ENCODE measurements at regions of chr2 and their contacts with region 1.

Region 1: GRCh38 chr2:96951093-96951654 is 35.2 kb downstream of the FAM178B start:
- DNase-seq: peak; percentile 77 to 78
- H3K4me3 ChIP-seq: peak overlapping the region in 2 of 3 donors; percentile 2 to 31
- H3K27ac ChIP-seq: peak overlapping the region in 1 of 2 donors; percentile 49
- H3K4me1 ChIP-seq: peaks cover 8 to 19% of the 10 kb centered on the region in 2 donors
- H3K27me3 ChIP-seq: no peaks in the 10 kb centered on the region
- CTCF ChIP-seq: peak; percentile 94 to 97 (median 96)
- POLR2A ChIP-seq: no peak

Region 2: DNA sequence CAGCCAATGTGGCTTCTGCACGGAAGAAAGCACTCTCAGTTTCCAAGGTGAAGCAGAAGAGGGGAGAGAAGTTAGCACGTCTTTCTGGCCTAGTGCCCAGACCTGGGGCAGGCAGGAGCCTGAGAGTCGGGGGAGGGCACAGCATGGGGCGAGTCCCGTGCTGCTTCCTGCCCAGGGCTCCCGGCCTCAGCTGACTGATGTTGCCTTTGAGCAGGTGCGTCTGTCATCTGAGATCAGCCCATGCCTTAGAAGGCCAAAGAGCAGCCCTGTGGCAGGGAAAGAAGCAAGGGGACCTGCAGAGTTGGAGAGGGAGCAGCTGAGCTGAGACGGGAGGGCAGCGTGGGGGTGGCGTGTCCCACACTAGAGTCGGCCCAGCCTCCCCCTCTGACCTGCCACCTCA is 1650.7 kb before region 1 on chr2:
- intact Hi-C with region 1: no loop called
- DNase-seq: peak in 1 of 2 donors; percentile 53
- H3K4me3 ChIP-seq: no peak overlapping the region
- H3K27ac ChIP-seq: no peak overlapping the region
- H3K4me1 ChIP-seq: peaks cover 0 to 4% of the 10 kb centered on the region in 2 donors
- H3K27me3 ChIP-seq: no peaks in the 10 kb centered on the region
- CTCF ChIP-seq: no peak
- POLR2A ChIP-seq: no peak

Region 3: GRCh38 chr2:96638144-96639121 is 312.7 kb before region 1 on chr2 and contains the start of gene KANSL3:
- intact Hi-C with region 1: no loop called
- DNase-seq: peak; percentile 86 to 95
- H3K4me3 ChIP-seq: peak within 1 kb of the TSS; percentile 56 to 81 (median 74)
- H3K27ac ChIP-seq: peak within 1 kb of the TSS; percentile 98 to 99
- H3K4me1 ChIP-seq: peaks cover 0 to 20% of the 10 kb centered on the region in 2 donors
- H3K27me3 ChIP-seq: no peaks in the 10 kb centered on the region
- CTCF ChIP-seq: peak in 2 of 3 donors; percentile 14 to 29
- POLR2A ChIP-seq: peak; percentile 92
- total RNA-seq, gene KANSL3: 44.2 to 64.1 (median 53.1) TPM

Region 4: GRCh38 chr2:96868555-96869280 is 82.5 kb before region 1 on chr2:
- intact Hi-C with region 1: loop called (anchors 5 kb)
- DNase-seq: peak; percentile 80 to 84
- H3K4me3 ChIP-seq: peak overlapping the region; percentile 78 to 99 (median 92)
- H3K27ac ChIP-seq: peak overlapping the region; percentile 94 to 96
- H3K4me1 ChIP-seq: peaks cover 0 to 16% of the 10 kb centered on the region in 2 donors
- H3K27me3 ChIP-seq: no peaks in the 10 kb centered on the region
- CTCF ChIP-seq: peak; percentile 27 to 62 (median 51)
- POLR2A ChIP-seq: no peak

Region 5: DNA sequence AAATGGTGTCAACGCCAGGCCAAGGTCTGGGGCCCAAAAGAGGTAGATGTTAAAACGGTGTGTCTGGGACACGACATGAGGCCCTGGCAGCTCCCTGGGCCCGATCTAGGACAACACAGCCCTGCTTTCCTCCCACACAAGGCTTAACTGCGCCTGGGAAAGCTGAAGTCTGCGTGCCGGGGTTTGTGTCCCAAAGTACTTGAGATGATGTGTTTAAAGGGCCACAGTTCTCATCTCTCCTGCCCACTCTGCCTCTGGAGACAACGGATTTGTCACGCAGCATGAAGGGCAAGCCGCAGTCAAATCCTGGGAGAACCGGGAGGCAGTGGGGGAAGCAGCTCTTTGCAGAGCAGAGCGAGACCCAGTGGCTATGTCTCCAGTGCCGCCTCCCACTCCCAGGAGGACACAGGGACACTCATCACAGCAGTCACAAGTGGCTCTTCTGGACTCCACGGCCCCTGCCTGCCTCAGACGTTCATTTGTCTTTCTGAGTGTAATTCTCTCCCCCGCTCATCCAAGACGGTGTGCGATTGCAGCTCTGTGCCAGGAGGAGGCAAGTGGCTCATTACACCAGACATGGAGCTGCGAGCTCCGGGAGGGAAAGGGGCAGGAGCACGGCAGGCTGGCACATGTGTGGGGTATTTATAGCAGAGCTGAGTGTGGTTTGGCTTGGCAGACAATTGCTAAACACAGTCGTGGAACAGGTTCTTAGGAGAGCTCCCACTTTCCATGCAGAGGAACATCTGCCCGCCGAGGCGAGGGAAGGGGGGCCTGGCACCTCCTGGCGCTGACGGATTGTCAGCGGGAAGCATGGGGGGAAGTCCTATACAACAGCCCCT is 23.6 kb before region 1 on chr2:
- intact Hi-C with region 1: loop called (anchors 1 kb)
- DNase-seq: peak; percentile 77 to 96
- H3K4me3 ChIP-seq: peak overlapping the region in 2 of 3 donors; percentile 35 to 60
- H3K27ac ChIP-seq: peak overlapping the region; percentile 76 to 80
- H3K4me1 ChIP-seq: peaks cover 0 to 9% of the 10 kb centered on the region in 2 donors
- H3K27me3 ChIP-seq: no peaks in the 10 kb centered on the region
- CTCF ChIP-seq: peak in 2 of 3 donors; percentile 34 to 70
- POLR2A ChIP-seq: no peak

Region 6: GRCh38 chr2:98134172-98135005 is 1183.2 kb after region 1 on chr2:
- intact Hi-C with region 1: no loop called
- DNase-seq: no peak
- H3K4me3 ChIP-seq: no peak overlapping the region
- H3K27ac ChIP-seq: peak overlapping the region in 1 of 2 donors; percentile 32
- H3K4me1 ChIP-seq: no peaks in the 10 kb centered on the region
- H3K27me3 ChIP-seq: no peaks in the 10 kb centered on the region
- CTCF ChIP-seq: no peak
- POLR2A ChIP-seq: no peak